Activated CD4-positive, alpha-beta memory T cell treated with anti-CD3 and anti-CD28 coated beads for 36 hours (primary cell): ENCODE measurements at regions of chr10 and their contacts with region 1.

Region 1: DNA sequence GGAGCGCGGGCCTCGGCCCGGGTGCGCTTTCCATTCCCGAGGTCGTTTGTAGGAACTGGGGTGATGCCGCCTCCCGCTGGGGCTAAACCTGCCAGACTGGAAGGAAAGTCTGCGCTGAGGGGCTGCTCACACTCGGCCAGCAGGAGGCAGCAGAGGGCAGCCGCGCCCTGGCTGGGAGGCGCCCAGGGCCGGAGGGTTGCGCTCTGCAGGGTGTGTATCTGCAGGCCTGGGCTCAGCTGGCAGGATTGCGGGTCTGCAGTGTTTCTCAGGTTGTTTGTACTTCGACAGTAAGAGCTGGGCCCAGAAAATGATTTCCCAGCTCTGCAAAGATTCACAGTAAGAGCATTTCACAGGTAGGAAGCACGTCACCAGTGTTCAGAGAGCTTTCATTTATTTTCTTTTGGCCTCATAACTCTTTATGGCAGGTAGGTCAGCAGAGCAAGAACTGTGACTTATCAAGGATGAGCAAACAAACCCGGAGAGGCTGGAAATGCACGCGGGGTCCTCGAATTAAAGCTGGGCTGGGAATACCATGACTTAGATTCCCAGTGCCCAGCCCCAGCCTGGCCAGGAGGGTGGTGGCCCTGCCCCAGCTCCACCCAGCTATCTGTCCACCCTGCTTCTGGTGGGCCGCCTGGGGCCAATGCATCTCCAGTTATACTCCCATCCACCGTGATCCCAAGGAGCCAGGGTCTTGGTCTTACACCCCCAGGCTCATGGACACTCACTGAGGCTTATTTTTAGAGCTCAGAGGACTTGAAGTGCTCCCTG is 15.2 kb upstream of the PPP2R2D start:
- DNase-seq: peak; percentile 86
- H3K4me3 Mint-ChIP-seq: no peak overlapping the region
- H3K27ac Mint-ChIP-seq: peak overlapping the region; percentile 29
- H3K4me1 Mint-ChIP-seq: peaks cover 3% of the 10 kb centered on the region
- H3K27me3 Mint-ChIP-seq: peaks cover 2% of the 10 kb centered on the region

Region 2: GRCh38 chr10:131915990-131916766 is 30.6 kb after region 1 on chr10:
- CTCF ChIA-PET with region 1: no interaction called
- POLR2A ChIA-PET with region 1: no interaction called
- intact Hi-C with region 1: no loop called
- DNase-seq: no peak
- H3K4me3 Mint-ChIP-seq: no peak overlapping the region
- H3K27ac Mint-ChIP-seq: peak overlapping the region; percentile 85
- H3K4me1 Mint-ChIP-seq: peaks cover 71% of the 10 kb centered on the region
- H3K27me3 Mint-ChIP-seq: no peaks in the 10 kb centered on the region

Region 3: GRCh38 chr10:131943021-131943814 is 57.6 kb after region 1 on chr10:
- CTCF ChIA-PET with region 1: interaction called, 31 read pairs
- POLR2A ChIA-PET with region 1: no interaction called
- intact Hi-C with region 1: loop called (anchors 1 kb)
- DNase-seq: peak; percentile 40
- H3K4me3 Mint-ChIP-seq: no peak overlapping the region
- H3K27ac Mint-ChIP-seq: no peak overlapping the region
- H3K4me1 Mint-ChIP-seq: no peaks in the 10 kb centered on the region
- H3K27me3 Mint-ChIP-seq: no peaks in the 10 kb centered on the region

Region 4: DNA sequence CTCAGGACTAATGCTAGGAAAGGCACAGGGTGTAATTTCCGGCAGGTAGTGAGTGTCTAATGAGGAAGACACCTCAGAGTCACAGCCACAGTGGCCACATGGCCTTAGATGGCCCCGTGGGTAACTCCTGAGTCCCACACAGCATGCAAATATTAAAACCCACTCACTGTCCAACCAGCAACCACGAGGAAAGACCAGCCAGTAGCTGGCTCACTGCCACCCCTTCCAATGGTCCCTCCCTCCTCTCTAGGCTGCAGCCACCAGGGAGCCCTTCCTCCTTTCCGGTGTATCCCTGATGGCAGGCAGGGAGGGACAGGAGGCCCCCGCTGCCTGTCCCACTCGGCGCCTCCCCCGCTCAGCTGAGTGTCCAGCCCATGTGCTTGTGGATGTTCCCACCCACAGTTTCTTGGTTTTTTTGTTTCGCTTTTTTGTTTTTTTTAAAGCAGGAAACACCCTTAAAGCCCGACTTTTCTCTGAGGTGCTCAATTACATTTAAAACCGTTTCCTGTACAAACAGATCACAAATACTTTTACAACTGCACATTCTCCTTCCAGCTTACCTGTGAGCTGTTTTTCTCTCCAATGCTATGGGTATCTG is 87.0 kb after region 1 on chr10:
- CTCF ChIA-PET with region 1: interaction called, 12 read pairs
- POLR2A ChIA-PET with region 1: no interaction called
- intact Hi-C with region 1: no loop called
- DNase-seq: peak; percentile 58
- H3K4me3 Mint-ChIP-seq: peak overlapping the region; percentile 66
- H3K27ac Mint-ChIP-seq: peak overlapping the region; percentile 89
- H3K4me1 Mint-ChIP-seq: peaks cover 60% of the 10 kb centered on the region
- H3K27me3 Mint-ChIP-seq: no peaks in the 10 kb centered on the region

Region 5: DNA sequence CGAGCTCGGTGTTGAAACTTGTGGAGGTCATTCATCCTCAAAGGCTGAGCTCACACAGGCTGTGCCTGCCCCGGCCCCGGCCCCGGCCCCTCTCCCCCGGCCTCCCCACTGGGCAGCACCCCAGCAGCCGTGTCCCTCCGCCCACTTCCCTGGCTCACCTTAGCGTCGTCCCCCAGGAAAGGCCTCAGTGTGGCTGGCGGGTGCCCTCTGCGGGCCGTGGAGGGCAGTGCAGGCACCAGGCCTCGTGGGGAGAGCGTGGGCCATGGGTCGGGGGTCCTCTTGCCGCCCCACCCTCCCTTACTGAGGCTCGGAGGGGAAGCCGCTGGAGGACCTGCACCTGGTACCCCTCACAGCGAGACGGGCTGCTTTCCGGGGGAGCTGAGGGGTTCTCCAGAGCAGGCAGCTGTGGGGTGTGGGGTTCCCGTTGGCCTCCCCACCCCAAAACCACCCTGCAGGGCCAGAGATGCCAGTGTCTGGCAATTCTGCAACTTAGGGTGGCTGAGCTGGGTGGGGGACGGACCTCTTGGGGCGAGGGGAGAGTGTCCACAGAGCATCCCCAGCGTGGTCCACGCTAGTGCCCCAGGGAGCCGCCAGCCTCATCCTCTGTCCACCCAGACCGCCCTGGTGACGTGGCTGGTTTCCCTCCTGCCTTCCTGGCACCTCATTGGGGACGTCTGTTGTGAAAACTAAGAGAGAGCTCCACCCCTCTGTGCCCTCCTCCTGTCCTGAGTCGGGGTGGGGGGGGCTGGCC is 257.0 kb after region 1 on chr10:
- CTCF ChIA-PET with region 1: interaction called, 6 read pairs
- POLR2A ChIA-PET with region 1: no interaction called
- intact Hi-C with region 1: loop called (anchors 1 kb)
- DNase-seq: peak; percentile 59
- H3K4me3 Mint-ChIP-seq: no peak overlapping the region
- H3K27ac Mint-ChIP-seq: no peak overlapping the region
- H3K4me1 Mint-ChIP-seq: no peaks in the 10 kb centered on the region
- H3K27me3 Mint-ChIP-seq: no peaks in the 10 kb centered on the region

Region 6: DNA sequence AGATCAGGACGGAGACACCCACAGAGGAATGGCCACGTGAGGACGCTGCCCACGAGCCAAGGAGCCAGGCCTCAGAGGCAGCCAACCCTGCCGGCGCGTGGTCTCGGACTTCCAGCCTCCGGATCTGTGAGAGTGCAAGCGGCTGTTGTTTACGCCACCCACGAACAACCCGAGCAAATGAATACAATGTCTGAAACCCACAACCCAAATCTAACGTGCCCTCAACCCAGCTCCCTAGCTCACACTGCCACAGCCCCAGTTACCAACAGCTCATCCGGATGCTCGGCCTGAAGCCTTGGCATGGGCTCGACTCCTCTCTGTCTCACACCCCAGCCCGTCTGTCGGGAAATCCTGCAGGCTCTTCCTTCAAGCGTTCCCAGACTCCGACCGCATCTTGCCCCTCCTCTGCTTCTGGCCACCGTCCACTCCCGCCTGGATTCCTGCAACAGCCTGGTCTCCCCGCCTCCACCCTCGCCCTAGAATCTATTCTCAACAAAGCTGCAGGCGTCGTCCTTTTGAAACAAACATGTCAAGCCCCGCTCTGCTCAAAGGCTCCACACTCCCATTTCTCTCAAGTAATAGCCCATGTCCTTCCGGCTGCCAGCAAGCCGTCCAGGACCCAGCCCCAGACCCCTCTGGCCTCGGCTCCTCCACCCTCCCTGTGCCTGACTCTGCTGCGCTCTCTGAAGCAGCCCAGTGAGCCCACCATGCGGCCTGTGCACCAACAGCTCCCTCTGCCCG is 386.8 kb after region 1 on chr10:
- CTCF ChIA-PET with region 1: no interaction called
- POLR2A ChIA-PET with region 1: no interaction called
- intact Hi-C with region 1: no loop called
- DNase-seq: no peak
- H3K4me3 Mint-ChIP-seq: no peak overlapping the region
- H3K27ac Mint-ChIP-seq: no peak overlapping the region
- H3K4me1 Mint-ChIP-seq: no peaks in the 10 kb centered on the region
- H3K27me3 Mint-ChIP-seq: no peaks in the 10 kb centered on the region